ENCODE measurements at regions of chr15 and their contacts with region 1.

Region 1: GRCh38 chr15:85543741-85544155 is 163.3 kb downstream of the AKAP13 start:
- DNase-seq: peak; percentile 60
- ATAC-seq: peak; percentile 10
- H3K4me3 Mint-ChIP-seq: peak overlapping the region; percentile 58
- H3K27ac Mint-ChIP-seq: peak overlapping the region; percentile 64
- H3K4me1 Mint-ChIP-seq: peaks cover 83% of the 10 kb centered on the region
- H3K27me3 Mint-ChIP-seq: no peaks in the 10 kb centered on the region

Region 2: DNA sequence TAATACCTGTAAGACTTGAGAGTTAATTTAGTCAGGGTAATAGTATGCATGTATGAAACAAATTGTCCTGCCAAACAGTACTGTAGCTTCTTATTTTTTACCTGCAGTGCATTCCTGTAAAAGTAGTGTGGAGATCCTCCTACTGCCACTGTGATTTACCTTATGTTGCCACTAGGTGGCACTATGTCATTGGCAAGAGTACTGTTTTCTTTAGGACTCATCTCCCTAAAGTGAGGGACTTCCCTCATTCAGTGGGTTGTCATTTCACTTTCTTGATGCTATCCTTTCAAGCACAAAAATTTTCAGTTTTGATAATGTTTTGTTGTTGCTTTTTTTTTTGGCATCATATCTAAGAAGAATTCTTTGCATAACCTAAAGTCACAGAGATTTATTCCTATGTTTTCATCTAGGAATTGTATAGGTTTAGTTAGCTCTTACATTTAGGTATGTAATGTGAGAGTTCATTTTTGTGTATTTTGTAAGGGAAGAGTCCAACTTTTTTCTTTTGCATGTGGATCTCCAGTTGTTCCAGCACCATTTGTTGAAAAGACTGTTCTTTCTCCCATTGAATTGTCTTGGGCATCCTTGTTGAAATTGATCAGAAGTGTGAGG is 57.7 kb before region 1 on chr15:
- CTCF ChIA-PET with region 1: interaction called, 4 read pairs
- POLR2A ChIA-PET with region 1: no interaction called
- intact Hi-C with region 1: loop called in 1 of 2 experiments (anchors 2 kb)
- DNase-seq: peak; percentile 74
- ATAC-seq: peak; percentile 92
- H3K4me3 Mint-ChIP-seq: no peak overlapping the region
- H3K27ac Mint-ChIP-seq: peak overlapping the region; percentile 23
- H3K4me1 Mint-ChIP-seq: peaks cover 73% of the 10 kb centered on the region
- H3K27me3 Mint-ChIP-seq: no peaks in the 10 kb centered on the region

Region 3: GRCh38 chr15:85527895-85528294 is 15.9 kb before region 1 on chr15:
- CTCF ChIA-PET with region 1: interaction called, 14 read pairs
- POLR2A ChIA-PET with region 1: interaction called, 5 read pairs
- intact Hi-C with region 1: no loop called
- DNase-seq: no peak
- ATAC-seq: no peak
- H3K4me3 Mint-ChIP-seq: no peak overlapping the region
- H3K27ac Mint-ChIP-seq: no peak overlapping the region
- H3K4me1 Mint-ChIP-seq: peaks cover 32% of the 10 kb centered on the region
- H3K27me3 Mint-ChIP-seq: no peaks in the 10 kb centered on the region

Region 4: GRCh38 chr15:85618956-85619491 is 75.3 kb after region 1 on chr15:
- CTCF ChIA-PET with region 1: no interaction called
- POLR2A ChIA-PET with region 1: interaction called, 3 read pairs
- intact Hi-C with region 1: loop called in 1 of 2 experiments (anchors 1 kb)
- DNase-seq: peak; percentile 78
- ATAC-seq: peak; percentile 90
- H3K4me3 Mint-ChIP-seq: no peak overlapping the region
- H3K27ac Mint-ChIP-seq: no peak overlapping the region
- H3K4me1 Mint-ChIP-seq: peaks cover 48% of the 10 kb centered on the region
- H3K27me3 Mint-ChIP-seq: no peaks in the 10 kb centered on the region

Region 5: DNA sequence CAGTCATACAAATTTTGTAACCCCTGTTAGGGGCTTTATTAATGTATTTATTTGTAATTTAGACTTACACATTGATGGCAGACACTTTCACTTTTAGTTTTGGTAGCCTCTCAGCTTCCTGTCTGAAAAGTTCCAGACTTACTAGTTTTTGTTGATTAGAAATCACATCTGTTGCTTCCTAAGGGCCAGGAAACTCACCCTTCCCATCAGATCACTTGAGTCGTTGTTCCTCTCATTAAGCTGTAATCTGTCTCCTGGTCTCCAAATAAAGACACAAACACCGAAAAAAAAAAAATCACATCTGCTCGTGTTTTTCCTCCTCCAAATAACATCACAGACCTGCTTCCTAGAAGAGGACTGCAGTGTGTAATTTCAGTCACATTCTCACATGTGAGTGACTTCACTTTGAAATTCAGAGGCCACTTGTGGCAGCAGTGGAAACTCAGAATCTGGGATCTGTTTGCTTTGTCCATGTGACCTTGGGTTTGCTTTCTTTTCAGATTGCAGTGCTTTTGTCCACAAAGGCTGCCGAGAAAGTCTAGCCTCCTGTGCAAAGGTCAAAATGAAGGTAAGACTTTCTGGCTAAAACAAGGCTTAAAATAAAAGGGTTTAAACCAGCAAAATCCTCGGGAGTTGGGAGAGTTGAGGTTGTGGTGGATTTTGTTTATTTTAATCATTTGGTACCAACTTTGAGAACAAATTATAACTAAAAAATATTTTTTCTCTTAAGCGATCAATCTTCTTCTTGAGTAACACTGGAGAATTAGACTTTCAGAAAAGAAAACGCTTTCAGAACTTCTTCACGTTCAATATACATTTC is 164.0 kb after region 1 on chr15:
- CTCF ChIA-PET with region 1: interaction called, 3 read pairs
- POLR2A ChIA-PET with region 1: interaction called, 3 read pairs
- intact Hi-C with region 1: loop called in 1 of 2 experiments (anchors 2 kb)
- DNase-seq: peak; percentile 47
- ATAC-seq: peak; percentile 13
- H3K4me3 Mint-ChIP-seq: peak overlapping the region; percentile 68
- H3K27ac Mint-ChIP-seq: peak overlapping the region; percentile 96
- H3K4me1 Mint-ChIP-seq: peaks cover 90% of the 10 kb centered on the region
- H3K27me3 Mint-ChIP-seq: no peaks in the 10 kb centered on the region

Measured in activated CD4-positive, alpha-beta T cell treated with anti-CD3 and anti-CD28 coated beads for 36 hours (primary cell).